HEK293 (cell line): ENCODE measurements at regions of chr11 and their contacts with region 1.

Region 1: GRCh38 chr11:789943-790342 is at the start of gene CEND1:
- H3K4me3 ChIP-seq: no peak within 1 kb of the TSS
- H3K27ac ChIP-seq: no peak within 1 kb of the TSS
- H3K4me1 ChIP-seq: no peaks in the 10 kb centered on the region
- CTCF ChIP-seq: no peak

Region 2: GRCh38 chr11:575996-576768 is 213.8 kb before region 1 on chr11 and contains the start of gene PHRF1:
- CTCF ChIA-PET with region 1: no interaction called
- POLR2A ChIA-PET with region 1: no interaction called
- H3K4me3 ChIP-seq: peak within 1 kb of the TSS; percentile 75
- H3K27ac ChIP-seq: peak within 1 kb of the TSS; percentile 94
- H3K4me1 ChIP-seq: peaks cover 5% of the 10 kb centered on the region
- CTCF ChIP-seq: no peak

Region 3: GRCh38 chr11:777288-778255 is 12.4 kb before region 1 on chr11 and contains the start of gene GATD1:
- CTCF ChIA-PET with region 1: no interaction called
- POLR2A ChIA-PET with region 1: interaction called, 11 read pairs
- H3K4me3 ChIP-seq: peak within 1 kb of the TSS; percentile 88
- H3K27ac ChIP-seq: peak within 1 kb of the TSS; percentile 80; the same call in 1 of the 2 replicates
- H3K4me1 ChIP-seq: no peaks in the 10 kb centered on the region; the same call in 1 of the 2 replicates
- CTCF ChIP-seq: no peak

Region 4: DNA sequence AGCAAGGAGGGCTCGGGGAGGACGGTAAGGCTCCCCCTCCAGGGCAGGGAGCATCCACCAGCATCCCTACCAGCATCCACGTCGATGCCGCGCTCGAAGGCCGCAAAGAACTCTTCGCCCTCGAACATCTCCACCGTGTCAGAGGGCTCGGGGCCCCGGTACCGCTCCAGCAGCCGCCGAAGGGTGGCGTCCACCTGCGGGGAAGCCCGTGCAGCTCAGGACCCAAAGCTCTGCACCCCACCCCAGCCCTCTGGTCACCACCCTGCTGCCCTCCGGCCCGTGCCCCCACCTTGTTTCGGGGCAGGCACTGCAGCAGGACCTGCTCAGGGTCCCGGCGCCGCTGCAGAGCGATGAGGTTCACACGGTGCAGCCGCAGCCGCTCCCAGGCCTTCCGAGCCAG is 10.5 kb after region 1 on chr11:
- CTCF ChIA-PET with region 1: no interaction called
- POLR2A ChIA-PET with region 1: no interaction called
- H3K4me3 ChIP-seq: no peak overlapping the region
- H3K27ac ChIP-seq: no peak overlapping the region
- H3K4me1 ChIP-seq: peaks cover 6% of the 10 kb centered on the region
- CTCF ChIP-seq: no peak

Region 5: DNA sequence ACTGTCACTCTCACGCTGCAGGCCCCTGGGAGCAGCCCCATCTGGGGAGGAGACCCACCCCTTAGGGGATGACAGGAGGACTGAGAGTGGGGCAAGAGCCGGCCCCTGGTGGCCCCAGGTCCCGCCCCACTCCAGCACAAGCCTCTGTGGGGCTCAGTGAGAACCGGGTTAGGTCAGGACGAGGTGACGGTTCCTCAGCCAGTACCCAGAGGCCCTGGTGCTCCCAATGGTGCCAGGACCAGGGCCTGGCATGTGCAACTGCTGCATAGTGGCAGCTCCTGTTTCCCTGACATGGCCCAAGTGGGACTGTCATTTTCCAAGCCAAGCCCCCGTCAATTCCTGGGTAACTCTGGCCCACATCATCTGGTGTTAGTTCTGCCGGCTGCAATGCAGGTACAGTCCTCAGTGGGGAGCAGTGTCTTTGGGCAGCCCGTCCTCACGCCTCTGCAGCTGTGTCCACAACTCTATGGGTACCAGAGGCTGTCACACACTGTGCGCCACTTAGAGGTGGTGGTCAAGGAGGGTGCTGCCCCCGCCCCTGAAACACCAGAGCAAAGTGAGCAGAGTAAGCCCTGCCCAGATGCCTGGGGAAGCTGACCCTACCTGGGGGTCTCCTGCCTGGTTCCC is 104.7 kb after region 1 on chr11:
- CTCF ChIA-PET with region 1: no interaction called
- POLR2A ChIA-PET with region 1: no interaction called
- H3K4me3 ChIP-seq: no peak overlapping the region
- H3K27ac ChIP-seq: no peak overlapping the region
- H3K4me1 ChIP-seq: no peaks in the 10 kb centered on the region
- CTCF ChIP-seq: no peak